A673 (cell line): ENCODE measurements at regions of chr16 and their contacts with region 1.

Region 1: GRCh38 chr16:54473226-54473993 is 186.8 kb upstream of the IRX3 start:
- DNase-seq: no peak
- H3K4me3 ChIP-seq: no peak overlapping the region
- H3K27ac ChIP-seq: no peak overlapping the region
- H3K4me1 ChIP-seq: peaks cover 27% of the 10 kb centered on the region
- H3K27me3 ChIP-seq: no peaks in the 10 kb centered on the region
- CTCF ChIP-seq: no peak

Region 2: DNA sequence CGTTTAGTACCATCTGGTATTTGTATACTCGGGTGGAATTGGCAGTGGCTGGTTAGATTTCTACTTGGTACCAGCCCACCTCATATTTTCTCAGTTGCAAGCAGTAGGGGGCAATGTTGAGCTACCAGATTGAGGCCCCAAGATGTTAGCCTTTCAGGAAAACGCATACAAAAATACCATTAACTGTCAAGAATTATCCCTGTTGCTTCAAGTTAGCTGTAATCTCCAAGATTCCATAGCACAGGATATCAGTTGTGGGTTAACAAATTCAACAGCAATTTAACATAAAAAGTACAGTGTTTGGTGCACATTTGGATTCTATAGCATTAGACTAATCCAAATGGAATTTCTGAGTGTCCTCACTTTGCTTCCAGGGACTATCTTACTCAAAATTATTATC is 581.3 kb before region 1 on chr16:
- CTCF ChIA-PET with region 1: no interaction called
- POLR2A ChIA-PET with region 1: no interaction called
- intact Hi-C with region 1: loop called (anchors 10 kb)
- DNase-seq: peak; percentile 77
- H3K4me3 ChIP-seq: no peak overlapping the region
- H3K27ac ChIP-seq: no peak overlapping the region
- H3K4me1 ChIP-seq: peaks cover 42% of the 10 kb centered on the region
- H3K27me3 ChIP-seq: no peaks in the 10 kb centered on the region
- CTCF ChIP-seq: peak; percentile 85